ENCODE measurements at regions of chr12 and their contacts with region 1.

Region 1: GRCh38 chr12:40312982-40313576 is 88.3 kb downstream of the LRRK2 start:
- DNase-seq: no peak
- ATAC-seq: peak; percentile 51; the same call in 2 of the 3 replicates
- H3K4me3 ChIP-seq: no peak overlapping the region
- H3K27ac ChIP-seq: no peak overlapping the region
- H3K4me1 ChIP-seq: peaks cover 16% of the 10 kb centered on the region
- H3K27me3 ChIP-seq: peaks cover 0 to 2% of the 10 kb centered on the region in 2 experiments; a peak in 1 of 4 replicates
- CTCF ChIP-seq: peak; percentile 13 to 54 (median 26); a peak in 2 of 6 replicates
- EP300 ChIP-seq: no peak
- POLR2A ChIP-seq: no peak
- RAD21 ChIP-seq: peak; percentile 78

Region 2: DNA sequence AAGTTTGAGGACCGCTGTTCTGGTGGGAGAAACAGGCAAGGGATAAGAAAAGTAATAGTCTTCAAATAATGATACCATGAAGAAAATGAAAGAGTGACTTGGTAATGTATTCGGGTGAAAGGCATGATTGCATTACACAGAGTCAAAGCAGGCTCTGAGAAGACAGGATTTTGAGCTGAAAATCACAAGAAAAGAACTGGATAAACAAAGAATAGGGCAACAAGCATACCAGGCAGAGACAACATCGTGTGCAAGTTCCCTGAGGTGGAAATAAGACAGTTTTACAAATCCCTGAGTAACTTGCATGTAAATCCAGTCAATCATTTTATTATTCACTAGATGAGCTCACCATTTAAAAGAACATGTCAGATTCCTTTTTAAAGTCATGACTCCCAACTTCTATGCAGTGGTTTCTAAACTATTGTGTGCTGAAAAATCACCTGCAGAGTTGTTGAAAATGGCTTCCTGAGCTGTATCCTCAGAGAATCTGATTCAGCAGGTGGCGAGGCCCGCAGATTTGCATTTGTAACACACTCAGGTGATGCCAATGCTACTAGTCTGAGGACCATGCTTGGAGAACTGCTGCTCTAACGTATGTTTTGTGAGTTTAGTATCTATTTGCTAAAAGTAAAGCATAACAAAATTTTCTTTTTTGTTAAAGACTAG is 560.5 kb before region 1 on chr12:
- CTCF ChIA-PET with region 1: no interaction called
- POLR2A ChIA-PET with region 1: no interaction called
- RAD21 ChIA-PET with region 1: no interaction called
- SMC1A ChIA-PET with region 1: no interaction called
- in situ Hi-C with region 1: no loop called
- intact Hi-C with region 1: no loop called
- DNase-seq: no peak
- ATAC-seq: no peak
- H3K4me3 ChIP-seq: no peak overlapping the region
- H3K27ac ChIP-seq: no peak overlapping the region
- H3K4me1 ChIP-seq: no peaks in the 10 kb centered on the region
- H3K27me3 ChIP-seq: no peaks in the 10 kb centered on the region
- CTCF ChIP-seq: no peak
- EP300 ChIP-seq: no peak
- POLR2A ChIP-seq: no peak
- RAD21 ChIP-seq: no peak

Region 3: GRCh38 chr12:40010899-40011774 is 301.9 kb before region 1 on chr12:
- CTCF ChIA-PET with region 1: interaction called, 39 read pairs
- POLR2A ChIA-PET with region 1: no interaction called
- RAD21 ChIA-PET with region 1: interaction called, 18 read pairs
- SMC1A ChIA-PET with region 1: interaction called, 14 read pairs
- in situ Hi-C with region 1: loop called (anchors 5 kb)
- intact Hi-C with region 1: loop called (anchors 1 kb)
- DNase-seq: peak; percentile 35
- ATAC-seq: peak; percentile 97
- H3K4me3 ChIP-seq: no peak overlapping the region
- H3K27ac ChIP-seq: no peak overlapping the region
- H3K4me1 ChIP-seq: no peaks in the 10 kb centered on the region
- H3K27me3 ChIP-seq: no peaks in the 10 kb centered on the region
- CTCF ChIP-seq: peak; percentile 67 to 85 (median 79)
- EP300 ChIP-seq: no peak
- POLR2A ChIP-seq: no peak
- RAD21 ChIP-seq: peak; percentile 71

Region 4: GRCh38 chr12:40152783-40153383 is 160.2 kb before region 1 on chr12:
- CTCF ChIA-PET with region 1: interaction called, 15 read pairs
- POLR2A ChIA-PET with region 1: no interaction called
- RAD21 ChIA-PET with region 1: interaction called, 72 read pairs
- SMC1A ChIA-PET with region 1: interaction called, 66 read pairs
- in situ Hi-C with region 1: loop called (anchors 5 kb)
- intact Hi-C with region 1: loop called (anchors 1 kb)
- DNase-seq: no peak
- ATAC-seq: peak; percentile 78
- H3K4me3 ChIP-seq: no peak overlapping the region
- H3K27ac ChIP-seq: no peak overlapping the region
- H3K4me1 ChIP-seq: no peaks in the 10 kb centered on the region
- H3K27me3 ChIP-seq: no peaks in the 10 kb centered on the region
- CTCF ChIP-seq: peak; percentile 50 to 69 (median 66); a peak in 5 of 6 replicates
- EP300 ChIP-seq: no peak
- POLR2A ChIP-seq: no peak
- RAD21 ChIP-seq: peak; percentile 84

Region 5: DNA sequence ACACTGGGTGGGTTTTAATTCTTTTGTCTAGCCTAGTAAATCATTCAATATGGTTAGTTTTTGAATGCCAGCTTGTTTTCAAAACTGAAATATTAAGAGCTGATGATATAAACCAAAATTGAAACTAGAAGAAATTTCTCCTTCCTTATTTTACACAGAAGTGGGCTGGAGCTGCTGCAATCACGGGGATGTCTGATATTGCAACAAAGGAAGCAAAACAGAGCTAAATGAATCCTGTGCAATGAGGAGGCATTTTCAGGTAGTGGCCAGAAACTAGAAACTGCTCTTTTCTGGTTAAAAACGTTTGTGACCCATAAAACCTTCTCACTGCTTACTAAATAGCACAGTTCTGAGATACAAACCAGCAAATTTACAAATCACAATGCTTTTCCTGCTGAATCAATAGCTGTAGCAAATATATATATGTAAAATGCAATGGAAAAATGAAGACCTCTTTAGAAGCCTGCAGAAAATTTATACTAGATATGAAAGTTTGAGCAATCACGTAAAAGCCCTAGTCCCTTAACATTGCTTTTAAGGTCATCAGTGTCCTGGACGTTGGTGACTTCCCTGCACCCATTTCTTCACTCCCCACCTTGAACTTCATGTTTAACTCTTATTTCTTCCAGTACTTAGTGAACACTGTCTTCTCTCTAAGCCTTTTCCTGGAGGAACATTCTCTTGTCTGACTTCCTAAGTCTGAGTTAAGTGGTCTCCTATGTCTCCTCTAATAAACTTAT is 104.2 kb before region 1 on chr12:
- CTCF ChIA-PET with region 1: interaction called, 8 read pairs
- POLR2A ChIA-PET with region 1: interaction called, 3 read pairs
- RAD21 ChIA-PET with region 1: interaction called, 6 read pairs
- SMC1A ChIA-PET with region 1: interaction called, 14 read pairs
- in situ Hi-C with region 1: no loop called
- intact Hi-C with region 1: no loop called
- DNase-seq: no peak
- ATAC-seq: peak; percentile 94
- H3K4me3 ChIP-seq: no peak overlapping the region
- H3K27ac ChIP-seq: no peak overlapping the region
- H3K4me1 ChIP-seq: peaks cover 8% of the 10 kb centered on the region
- H3K27me3 ChIP-seq: no peaks in the 10 kb centered on the region
- CTCF ChIP-seq: no peak
- EP300 ChIP-seq: no peak
- POLR2A ChIP-seq: no peak
- RAD21 ChIP-seq: no peak

Region 6: DNA sequence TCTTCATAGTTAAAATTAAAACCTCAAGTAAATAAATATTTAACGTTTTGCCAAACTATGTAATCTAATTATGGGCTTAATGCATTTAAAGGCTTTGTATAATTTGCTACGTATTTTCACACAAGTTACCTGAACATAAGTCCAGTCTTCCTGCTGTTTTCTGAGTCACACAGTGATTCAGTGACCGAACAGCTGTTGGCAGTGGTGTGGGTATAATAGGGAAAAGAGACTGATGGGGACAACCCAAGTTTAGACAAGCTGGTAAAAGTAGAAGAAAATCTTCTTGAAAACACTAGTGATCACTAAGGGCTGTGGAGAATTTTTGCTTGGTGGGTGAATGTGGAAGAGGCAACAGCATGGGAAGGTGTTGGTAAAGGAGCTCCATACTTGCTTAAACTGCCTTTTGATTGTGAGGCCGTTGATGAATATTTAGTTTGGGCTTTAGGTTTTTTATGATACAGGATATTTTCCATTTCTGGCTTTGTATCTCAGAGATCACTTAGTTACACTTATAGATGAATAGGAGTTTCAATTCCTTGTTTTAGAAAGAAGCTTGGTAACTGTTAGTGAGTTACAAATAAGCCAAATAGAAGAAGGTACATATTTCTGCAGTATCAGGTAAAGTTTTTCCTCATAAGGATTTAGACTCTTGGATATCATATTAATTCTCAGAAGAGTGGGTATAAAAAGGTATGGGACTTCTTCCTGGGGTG is 64.3 kb before region 1 on chr12:
- CTCF ChIA-PET with region 1: interaction called, 4 read pairs
- POLR2A ChIA-PET with region 1: no interaction called
- RAD21 ChIA-PET with region 1: no interaction called
- SMC1A ChIA-PET with region 1: interaction called, 10 read pairs
- in situ Hi-C with region 1: no loop called
- intact Hi-C with region 1: no loop called
- DNase-seq: no peak
- ATAC-seq: peak; percentile 87
- H3K4me3 ChIP-seq: no peak overlapping the region
- H3K27ac ChIP-seq: no peak overlapping the region
- H3K4me1 ChIP-seq: peaks cover 6% of the 10 kb centered on the region; the same call in 1 of the 2 replicates
- H3K27me3 ChIP-seq: no peaks in the 10 kb centered on the region
- CTCF ChIP-seq: no peak
- EP300 ChIP-seq: no peak
- POLR2A ChIP-seq: no peak
- RAD21 ChIP-seq: no peak

Region 7: GRCh38 chr12:40325349-40325960 is 12.4 kb after region 1 on chr12:
- CTCF ChIA-PET with region 1: interaction called, 64 read pairs
- POLR2A ChIA-PET with region 1: interaction called, 9 read pairs
- RAD21 ChIA-PET with region 1: interaction called, 6 read pairs
- SMC1A ChIA-PET with region 1: interaction called, 10 read pairs
- in situ Hi-C with region 1: no loop called
- intact Hi-C with region 1: no loop called
- DNase-seq: no peak
- ATAC-seq: peak; percentile 98
- H3K4me3 ChIP-seq: no peak overlapping the region
- H3K27ac ChIP-seq: no peak overlapping the region
- H3K4me1 ChIP-seq: no peaks in the 10 kb centered on the region
- H3K27me3 ChIP-seq: no peaks in the 10 kb centered on the region
- CTCF ChIP-seq: peak; percentile 60 to 80 (median 78)
- EP300 ChIP-seq: no peak
- POLR2A ChIP-seq: no peak
- RAD21 ChIP-seq: peak; percentile 69